Aorta (tissue), 5 donors: ENCODE measurements at regions of chr16 and their contacts with region 1.

Region 1: DNA sequence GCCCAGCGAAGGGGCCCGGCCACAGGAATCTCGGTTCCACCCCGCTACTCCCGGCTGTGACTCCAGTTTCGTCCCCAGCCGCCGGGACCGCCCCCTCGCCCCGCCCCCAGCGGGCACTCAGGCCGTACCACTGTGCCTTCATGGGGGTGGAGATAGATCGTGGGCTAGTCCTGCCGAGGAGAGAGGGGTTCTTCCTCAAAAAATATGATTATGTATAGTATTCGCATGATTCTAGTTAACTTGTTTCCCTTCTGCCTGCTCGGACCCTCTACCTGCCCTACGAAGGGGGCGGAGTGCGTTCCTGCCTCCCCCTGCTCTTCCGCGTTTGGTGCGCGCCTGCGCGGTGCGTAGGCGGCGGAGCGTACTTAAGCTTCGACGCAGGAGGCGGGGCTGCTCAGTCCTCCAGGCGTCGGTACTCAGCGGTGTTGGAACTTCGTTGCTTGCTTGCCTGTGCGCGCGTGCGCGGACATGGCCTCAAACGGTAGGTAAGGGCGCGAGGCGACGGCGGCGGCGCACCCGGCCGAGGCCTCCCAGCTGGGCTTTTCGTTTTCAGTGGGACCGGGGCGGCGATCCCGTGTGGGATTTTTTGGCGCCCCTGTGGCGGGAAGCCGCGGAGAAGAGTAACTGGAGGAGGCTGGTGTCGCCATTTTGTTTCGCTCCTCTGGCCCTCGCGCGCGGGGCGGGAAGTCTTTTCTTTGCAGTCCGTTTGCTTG is at the start of gene FUS:
- DNase-seq: peak; percentile 94 to 97
- ATAC-seq: peak; percentile 98
- H3K4me3 ChIP-seq: peak within 1 kb of the TSS; percentile 45 to 85
- H3K27ac ChIP-seq: peak within 1 kb of the TSS in 1 of 2 donors; percentile 76
- H3K4me1 ChIP-seq: peaks cover 0 to 5% of the 10 kb centered on the region in 2 donors
- H3K27me3 ChIP-seq: peaks cover 0 to 2% of the 10 kb centered on the region in 2 donors
- total RNA-seq, gene FUS: 243 to 254 TPM

Region 2: DNA sequence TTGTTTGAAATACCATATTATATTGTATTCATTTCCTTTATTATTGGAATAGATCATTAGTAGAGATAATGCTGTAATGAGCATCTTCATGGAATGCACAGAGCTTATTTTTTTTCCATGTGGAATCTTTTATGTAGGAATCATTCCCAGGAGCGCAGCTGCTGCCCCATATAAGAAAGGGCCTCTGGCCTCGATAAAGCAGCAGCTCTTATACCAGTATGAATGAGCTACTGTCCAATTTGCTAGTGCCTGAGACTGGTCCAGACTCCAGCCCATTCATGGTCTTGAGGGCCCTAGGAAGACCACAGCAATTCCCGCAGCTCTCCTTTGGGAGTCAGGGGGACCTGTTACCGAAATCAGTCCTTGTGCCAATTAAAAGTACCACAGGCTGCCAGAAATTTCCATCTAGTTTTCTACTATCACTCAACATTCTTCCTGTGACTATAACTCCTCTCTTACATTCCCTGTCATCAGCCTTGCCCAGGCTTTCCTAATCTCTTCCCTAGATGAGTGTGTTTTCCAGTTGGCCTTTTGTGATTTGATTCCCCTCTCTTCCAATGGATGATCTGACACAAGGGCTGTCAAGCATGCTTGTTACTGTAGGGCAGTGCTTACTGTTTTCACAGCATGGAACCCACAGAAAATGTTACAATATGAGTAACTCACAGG is 260.7 kb after region 1 on chr16:
- intact Hi-C with region 1: loop called (anchors 10 kb)
- DNase-seq: no peak
- ATAC-seq: no peak
- H3K4me3 ChIP-seq: no peak overlapping the region
- H3K27ac ChIP-seq: no peak overlapping the region
- H3K4me1 ChIP-seq: no peaks in the 10 kb centered on the region
- H3K27me3 ChIP-seq: no peaks in the 10 kb centered on the region

Region 3: DNA sequence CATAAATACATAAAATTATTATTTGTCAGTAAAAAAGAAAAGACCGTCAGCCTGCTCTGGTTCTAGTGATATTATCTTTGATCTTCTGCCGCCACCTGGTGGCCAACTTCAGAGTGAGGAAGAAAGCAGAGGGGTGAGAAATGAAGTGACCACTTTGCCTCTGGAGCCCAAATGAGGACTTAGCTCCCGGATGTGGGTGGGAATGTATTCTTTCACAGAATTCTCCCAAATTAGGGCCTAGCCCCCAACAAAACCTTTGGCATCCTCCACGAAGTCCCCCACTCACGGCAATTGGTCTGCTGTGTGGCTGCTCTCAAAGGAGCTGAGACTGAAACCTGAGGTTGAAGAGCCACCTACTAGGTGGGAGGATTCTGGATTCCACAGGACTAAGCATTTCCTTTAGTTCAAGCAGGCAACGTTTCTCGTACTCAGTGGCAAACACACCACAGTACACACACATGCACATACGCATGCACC is 688.8 kb after region 1 on chr16:
- intact Hi-C with region 1: loop called in 1 of 2 experiments (anchors 5 kb)
- DNase-seq: peak; percentile 90 to 91
- ATAC-seq: peak; percentile 72
- H3K4me3 ChIP-seq: no peak overlapping the region
- H3K27ac ChIP-seq: no peak overlapping the region
- H3K4me1 ChIP-seq: no peaks in the 10 kb centered on the region
- H3K27me3 ChIP-seq: no peaks in the 10 kb centered on the region